ENCODE measurements at regions of chr17 and their contacts with region 1.

Region 1: DNA sequence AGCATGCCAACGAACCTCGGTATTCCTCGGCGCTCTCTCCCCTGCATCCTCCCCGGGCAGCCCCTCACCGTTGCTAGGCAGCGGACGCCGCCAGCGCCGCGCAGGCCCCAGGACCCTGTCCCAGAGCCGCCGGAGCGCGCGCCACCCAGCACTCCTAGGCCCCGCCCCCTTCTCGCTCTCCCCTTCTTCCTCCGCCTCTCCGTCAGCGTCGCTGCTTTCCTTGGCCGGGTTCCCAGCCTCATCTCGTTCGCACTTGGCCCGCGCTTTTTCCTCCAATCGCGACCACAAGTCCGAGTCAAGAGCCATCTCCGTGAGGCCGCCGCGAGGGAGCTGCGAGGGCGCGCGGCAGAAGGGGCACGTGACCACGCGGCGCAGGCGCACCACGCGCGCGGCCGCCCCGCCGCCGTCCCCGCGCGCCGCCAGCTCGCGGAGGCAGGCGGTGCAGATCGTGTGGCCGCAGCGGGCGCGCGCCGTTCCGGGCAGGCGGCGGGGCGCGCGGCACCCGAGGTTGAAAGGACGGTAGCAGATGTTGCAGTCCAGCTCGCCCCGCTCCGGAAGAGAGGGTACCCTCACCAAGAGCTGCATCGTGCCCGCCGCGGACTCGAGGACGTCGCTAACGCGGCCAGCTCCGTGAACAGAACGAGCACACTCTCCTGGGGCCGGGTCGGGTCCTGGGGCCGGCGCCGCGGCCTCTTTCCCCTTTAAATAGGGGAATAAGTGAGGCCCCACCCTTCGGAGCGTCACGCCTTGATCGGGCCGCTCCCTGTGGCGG is at the start of gene RNF227:
- DNase-seq: peak; percentile 14
- ATAC-seq: peak; percentile 67
- H3K4me3 ChIP-seq: peak within 1 kb of the TSS in 2 of 3 experiments; percentile 45 to 62; a peak in 3 of 6 replicates
- H3K27ac ChIP-seq: no peak within 1 kb of the TSS
- H3K4me1 ChIP-seq: peaks cover 22% of the 10 kb centered on the region
- H3K27me3 ChIP-seq: peaks cover 0 to 3% of the 10 kb centered on the region in 2 experiments; a peak in 1 of 5 replicates
- CTCF ChIP-seq: no peak; the same call in 1 of the 2 replicates
- EP300 ChIP-seq: no peak
- POLR2A ChIP-seq: no peak
- RAD21 ChIP-seq: no peak
- total RNA-seq, gene RNF227: 0.20 and 0.38 TPM in 2 replicates

Region 2: GRCh38 chr17:7873051-7873450 is 42.7 kb before region 1 on chr17:
- CTCF ChIA-PET with region 1: no interaction called
- POLR2A ChIA-PET with region 1: no interaction called
- in situ Hi-C with region 1: no loop called
- intact Hi-C with region 1: no loop called
- DNase-seq: no peak
- ATAC-seq: no peak
- H3K4me3 ChIP-seq: no peak overlapping the region
- H3K27ac ChIP-seq: no peak overlapping the region
- H3K4me1 ChIP-seq: peaks cover 10% of the 10 kb centered on the region
- H3K27me3 ChIP-seq: no peaks in the 10 kb centered on the region
- CTCF ChIP-seq: no peak
- EP300 ChIP-seq: no peak
- POLR2A ChIP-seq: no peak
- RAD21 ChIP-seq: no peak

Region 3: DNA sequence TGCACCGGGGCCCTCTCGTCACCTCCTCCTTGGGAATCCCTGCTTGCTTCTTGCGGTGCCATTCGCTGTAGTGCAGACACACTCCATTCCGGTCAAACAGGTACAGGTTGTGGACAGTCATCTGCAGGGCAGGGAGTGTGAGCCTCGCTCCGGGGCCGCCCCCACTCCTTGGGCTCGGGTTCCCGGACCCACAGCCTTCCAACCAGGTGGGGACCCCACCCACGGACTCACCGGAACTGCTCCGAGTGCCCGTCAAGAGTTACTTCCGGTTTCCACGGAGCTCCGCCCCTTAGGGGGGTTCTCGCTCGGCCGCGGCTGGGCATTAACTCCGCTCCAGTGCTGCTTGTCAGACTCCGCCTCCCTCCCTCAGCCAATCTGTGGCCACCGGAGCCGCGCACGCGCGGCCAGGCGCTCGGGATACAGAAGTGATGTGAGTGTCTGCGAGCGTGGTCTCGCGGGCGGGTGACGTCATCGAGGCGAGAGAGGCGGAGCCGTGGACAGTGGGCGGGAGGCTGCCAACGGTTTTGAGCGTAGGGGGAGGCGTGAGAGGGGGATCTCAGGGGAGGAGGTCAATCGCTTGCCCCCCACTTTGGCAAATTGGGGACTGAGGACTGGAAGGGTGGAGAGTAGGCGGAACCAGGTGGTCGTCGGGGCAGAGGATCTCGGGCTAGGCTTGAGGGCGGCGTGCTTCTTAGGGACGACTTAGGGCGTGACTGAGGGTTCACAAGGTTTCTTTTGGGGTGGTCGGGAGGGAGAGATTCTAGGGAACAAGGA is 16.1 kb after region 1 on chr17 and contains the starts of genes CNTROB and TRAPPC1:
- CTCF ChIA-PET with region 1: no interaction called
- POLR2A ChIA-PET with region 1: interaction called, 27 read pairs
- in situ Hi-C with region 1: no loop called
- intact Hi-C with region 1: no loop called
- DNase-seq: peak; percentile 97
- ATAC-seq: peak; percentile 94
- H3K4me3 ChIP-seq: peak within 1 kb of the TSS; percentile 80 to 93 (median 85)
- H3K27ac ChIP-seq: peak within 1 kb of the TSS; percentile 67
- H3K4me1 ChIP-seq: peaks cover 26% of the 10 kb centered on the region
- H3K27me3 ChIP-seq: no peaks in the 10 kb centered on the region; a peak in 1 of 5 replicates
- CTCF ChIP-seq: no peak
- EP300 ChIP-seq: 0 out of 4 replicates have a peak, but pooled peaks of 1 of the 2 experiments have one; percentile 24
- POLR2A ChIP-seq: peak; percentile 50 to 76
- RAD21 ChIP-seq: 0 out of 2 replicates have a peak, but pooled peaks have one; percentile 7
- total RNA-seq, gene CNTROB: 13.3 and 24.1 TPM in 2 replicates
- total RNA-seq, gene TRAPPC1: 28.1 and 36.9 TPM in 2 replicates

Region 4: GRCh38 chr17:7944326-7944725 is 28.5 kb after region 1 on chr17:
- CTCF ChIA-PET with region 1: no interaction called
- POLR2A ChIA-PET with region 1: no interaction called
- in situ Hi-C with region 1: no loop called
- intact Hi-C with region 1: no loop called
- DNase-seq: no peak
- ATAC-seq: no peak
- H3K4me3 ChIP-seq: no peak overlapping the region
- H3K27ac ChIP-seq: no peak overlapping the region
- H3K4me1 ChIP-seq: no peaks in the 10 kb centered on the region
- H3K27me3 ChIP-seq: no peaks in the 10 kb centered on the region
- CTCF ChIP-seq: no peak
- EP300 ChIP-seq: no peak
- POLR2A ChIP-seq: no peak
- RAD21 ChIP-seq: no peak

Region 5: DNA sequence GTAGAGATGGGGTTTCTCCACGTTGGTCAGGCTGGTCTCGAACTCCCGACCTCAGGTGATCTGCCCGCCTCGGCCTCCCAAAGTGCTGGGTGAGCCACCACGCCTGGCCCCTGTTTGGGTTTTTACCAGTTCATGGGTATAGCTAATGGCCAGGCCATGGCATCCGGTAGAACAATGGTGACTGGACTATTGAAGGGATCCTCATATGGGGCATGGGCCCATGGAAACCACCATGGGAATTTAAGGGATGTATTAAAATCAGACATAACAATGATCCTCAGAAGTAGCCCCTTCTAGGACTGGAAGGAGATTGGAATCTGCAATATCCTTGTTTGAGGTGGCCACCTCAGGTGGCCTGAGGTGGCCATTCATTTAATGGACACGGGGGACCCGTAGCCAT is 69.1 kb after region 1 on chr17:
- CTCF ChIA-PET with region 1: interaction called, 70 read pairs
- POLR2A ChIA-PET with region 1: no interaction called
- in situ Hi-C with region 1: loop called (anchors 5 kb)
- intact Hi-C with region 1: loop called (anchors 1 kb)
- DNase-seq: no peak
- ATAC-seq: no peak
- H3K4me3 ChIP-seq: no peak overlapping the region
- H3K27ac ChIP-seq: no peak overlapping the region
- H3K4me1 ChIP-seq: peaks cover 11% of the 10 kb centered on the region
- H3K27me3 ChIP-seq: peaks cover 3 to 26% of the 10 kb centered on the region in 2 experiments
- CTCF ChIP-seq: no peak
- EP300 ChIP-seq: no peak
- POLR2A ChIP-seq: no peak
- RAD21 ChIP-seq: no peak

Region 6: DNA sequence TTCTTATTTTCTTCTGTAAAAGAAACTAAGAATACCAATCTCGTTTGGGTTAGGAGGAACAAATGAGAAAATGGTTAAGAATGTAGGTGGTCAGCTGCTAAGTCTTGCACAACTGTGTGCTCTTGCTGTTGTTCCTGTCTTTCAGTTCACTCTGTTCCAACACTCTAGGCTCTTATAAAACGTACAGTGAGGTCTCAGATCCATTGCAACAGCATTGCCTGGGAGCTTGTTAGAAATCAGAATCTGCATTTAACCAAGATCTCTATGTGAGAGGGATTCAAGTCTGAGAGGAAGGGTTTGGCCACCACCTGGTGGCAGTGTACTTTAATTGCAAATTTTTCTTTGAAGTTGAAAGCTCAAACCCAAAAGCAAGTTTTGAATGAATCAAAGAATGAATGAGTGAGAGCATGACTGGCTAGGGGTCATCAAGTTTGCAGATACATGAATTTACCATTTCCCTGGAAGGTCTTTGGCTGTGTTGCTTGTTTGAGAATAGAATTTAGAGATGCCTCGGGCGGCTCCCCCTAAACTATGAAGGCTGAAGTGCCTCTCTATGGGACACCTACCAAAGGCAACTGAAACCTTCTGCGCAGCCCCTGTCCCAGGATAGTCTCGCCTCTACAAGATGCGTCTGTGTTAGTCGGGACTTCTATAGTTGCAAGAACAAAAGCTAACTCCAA is 125.6 kb after region 1 on chr17:
- CTCF ChIA-PET with region 1: interaction called, 16 read pairs
- POLR2A ChIA-PET with region 1: no interaction called
- in situ Hi-C with region 1: loop called (anchors 5 kb)
- intact Hi-C with region 1: loop called (anchors 5 kb)
- DNase-seq: peak; percentile 49
- ATAC-seq: peak; percentile 51
- H3K4me3 ChIP-seq: no peak overlapping the region
- H3K27ac ChIP-seq: no peak overlapping the region
- H3K4me1 ChIP-seq: peaks cover 16% of the 10 kb centered on the region; the same call in 1 of the 2 replicates
- H3K27me3 ChIP-seq: peaks cover 4 to 53% of the 10 kb centered on the region in 2 experiments; a peak in 3 of 5 replicates
- CTCF ChIP-seq: peak; percentile 72
- EP300 ChIP-seq: no peak
- POLR2A ChIP-seq: no peak
- RAD21 ChIP-seq: peak; percentile 67; the same call in 1 of the 2 replicates

Region 7: DNA sequence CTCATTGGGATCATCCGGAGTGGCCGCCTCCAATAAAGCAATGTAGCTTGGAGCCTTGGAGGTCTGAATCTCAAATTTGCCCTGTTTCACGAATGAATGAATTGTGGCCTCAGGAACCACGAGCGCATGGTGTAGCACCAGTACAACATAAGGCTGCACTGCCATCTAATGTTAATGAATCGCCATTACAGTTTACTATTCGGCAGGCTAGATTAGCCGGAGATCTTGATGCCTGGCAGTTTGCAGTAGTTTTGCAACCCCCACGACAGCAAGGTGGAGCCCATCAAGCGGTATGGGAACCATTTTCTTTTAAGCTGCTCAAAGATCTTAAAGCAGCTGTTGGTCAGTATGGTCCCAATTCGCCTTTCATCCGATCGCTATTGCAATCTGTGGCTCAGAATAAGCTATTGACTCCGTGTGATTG is 141.9 kb after region 1 on chr17:
- CTCF ChIA-PET with region 1: interaction called, 13 read pairs
- POLR2A ChIA-PET with region 1: interaction called, 8 read pairs
- in situ Hi-C with region 1: no loop called
- intact Hi-C with region 1: loop called (anchors 2 kb)
- DNase-seq: peak; percentile 75
- ATAC-seq: peak; percentile 46
- H3K4me3 ChIP-seq: peak overlapping the region; percentile 38 to 64 (median 51); a peak in 5 of 6 replicates
- H3K27ac ChIP-seq: peak overlapping the region; percentile 92
- H3K4me1 ChIP-seq: peaks cover 56% of the 10 kb centered on the region
- H3K27me3 ChIP-seq: peaks cover 3 to 32% of the 10 kb centered on the region in 2 experiments; a peak in 4 of 5 replicates
- CTCF ChIP-seq: peak; percentile 82
- EP300 ChIP-seq: no peak
- POLR2A ChIP-seq: peak in 1 of 2 experiments; percentile 52; a peak in 2 of 4 replicates
- RAD21 ChIP-seq: peak; percentile 61; the same call in 1 of the 2 replicates

Measured in HepG2 (cell line).